ENCODE measurements at regions of chr5 and their contacts with region 1.

Region 1: DNA sequence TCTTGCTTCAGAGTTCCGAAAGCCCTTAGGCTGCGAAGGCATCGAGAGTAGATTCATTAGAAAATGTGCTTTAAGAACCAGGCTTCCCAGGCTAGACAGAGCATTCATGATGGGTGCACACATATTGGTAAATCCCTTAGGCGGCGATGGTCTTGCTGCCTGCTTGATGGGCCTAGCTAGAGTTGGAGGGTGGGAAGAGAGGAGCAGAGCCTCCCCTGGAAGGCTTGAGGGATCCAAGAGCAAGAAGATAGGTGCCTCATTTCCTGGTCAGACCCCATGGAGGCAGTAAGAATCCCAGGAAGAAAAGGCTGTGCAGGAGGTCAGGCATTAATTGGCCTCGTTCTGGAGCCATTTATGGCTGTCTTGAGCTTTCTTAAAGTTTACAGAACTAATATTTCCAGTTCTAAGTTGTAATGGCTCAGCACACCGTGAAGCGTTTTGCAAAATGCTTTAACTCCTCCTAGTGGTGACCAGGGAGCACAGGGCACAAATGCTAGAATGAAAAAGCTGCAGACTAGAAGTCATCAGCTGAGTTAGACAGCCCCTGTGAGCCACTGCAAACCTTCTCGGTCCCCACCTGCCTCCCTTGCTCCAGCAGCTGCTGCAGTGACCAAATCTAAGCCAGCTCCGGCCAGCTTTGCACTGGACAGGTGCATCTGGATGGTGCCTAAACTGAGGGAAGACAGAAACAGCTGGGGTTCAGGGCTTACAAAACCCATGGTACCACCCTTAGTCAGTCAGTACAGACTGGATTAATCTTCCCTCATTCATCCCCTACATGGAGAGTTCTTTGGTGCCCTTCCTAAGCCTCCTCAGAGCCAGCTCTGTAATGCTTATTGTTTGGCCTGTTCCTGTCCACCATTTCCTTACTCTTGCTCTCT is 14.7 kb downstream of the SLC45A2 start:
- DNase-seq: peak; percentile 44 to 58
- ATAC-seq: peak; percentile 97
- H3K4me3 ChIP-seq: no peak overlapping the region
- H3K27ac ChIP-seq: no peak overlapping the region
- H3K4me1 ChIP-seq: no peaks in the 10 kb centered on the region
- CTCF ChIP-seq: peak; percentile 64
- EP300 ChIP-seq: no peak
- POLR2A ChIP-seq: no peak
- RAD21 ChIP-seq: peak; percentile 80 to 88

Region 2: GRCh38 chr5:33433303-33434240 is 536.2 kb before region 1 on chr5:
- CTCF ChIA-PET with region 1: interaction called, 32 read pairs
- POLR2A ChIA-PET with region 1: no interaction called
- DNase-seq: no peak
- ATAC-seq: no peak
- H3K4me3 ChIP-seq: no peak overlapping the region
- H3K27ac ChIP-seq: no peak overlapping the region
- H3K4me1 ChIP-seq: peaks cover 4% of the 10 kb centered on the region; the same call in 1 of the 3 replicates
- CTCF ChIP-seq: no peak
- EP300 ChIP-seq: no peak
- POLR2A ChIP-seq: no peak
- RAD21 ChIP-seq: no peak

Region 3: GRCh38 chr5:33470544-33470943 is 499.3 kb before region 1 on chr5:
- CTCF ChIA-PET with region 1: interaction called, 36 read pairs
- POLR2A ChIA-PET with region 1: no interaction called
- DNase-seq: peak; percentile 18 to 45
- ATAC-seq: peak; percentile 90 to 91
- H3K4me3 ChIP-seq: no peak overlapping the region
- H3K27ac ChIP-seq: no peak overlapping the region
- H3K4me1 ChIP-seq: peaks cover 6% of the 10 kb centered on the region; the same call in 1 of the 3 replicates
- CTCF ChIP-seq: peak; percentile 46
- EP300 ChIP-seq: no peak
- POLR2A ChIP-seq: no peak
- RAD21 ChIP-seq: peak; percentile 42 to 54

Region 4: DNA sequence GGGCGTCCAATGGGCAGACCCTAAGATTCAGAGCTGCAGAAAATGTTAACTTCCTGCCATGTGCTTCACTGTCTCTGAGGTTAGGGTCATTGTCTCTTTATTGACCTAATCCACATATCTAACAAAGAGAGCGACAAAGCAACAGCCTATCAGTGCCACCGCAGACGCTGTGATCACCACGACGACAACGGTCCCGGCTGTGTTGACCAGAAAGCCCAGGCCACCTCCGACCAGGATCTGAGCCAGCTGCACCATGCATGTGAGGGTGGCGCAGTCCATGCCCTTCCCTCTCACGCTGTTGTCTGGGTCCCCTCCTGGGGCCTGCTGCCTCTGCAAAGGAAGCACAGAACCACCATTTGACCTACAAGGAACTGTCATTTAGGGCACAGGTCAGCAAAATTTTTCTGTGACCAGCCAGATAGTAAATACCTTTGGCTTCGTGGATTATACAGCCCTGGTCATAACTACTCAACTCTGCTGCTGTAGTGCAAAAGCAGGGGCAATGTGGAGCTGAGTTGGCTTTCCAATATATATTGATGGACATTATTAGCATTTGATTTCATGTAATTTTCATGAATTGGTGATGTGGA is 25.2 kb before region 1 on chr5:
- CTCF ChIA-PET with region 1: interaction called, 11 read pairs
- POLR2A ChIA-PET with region 1: no interaction called
- DNase-seq: no peak
- ATAC-seq: no peak
- H3K4me3 ChIP-seq: no peak overlapping the region
- H3K27ac ChIP-seq: no peak overlapping the region
- H3K4me1 ChIP-seq: no peaks in the 10 kb centered on the region
- CTCF ChIP-seq: no peak
- EP300 ChIP-seq: no peak
- POLR2A ChIP-seq: no peak
- RAD21 ChIP-seq: no peak

Region 5: DNA sequence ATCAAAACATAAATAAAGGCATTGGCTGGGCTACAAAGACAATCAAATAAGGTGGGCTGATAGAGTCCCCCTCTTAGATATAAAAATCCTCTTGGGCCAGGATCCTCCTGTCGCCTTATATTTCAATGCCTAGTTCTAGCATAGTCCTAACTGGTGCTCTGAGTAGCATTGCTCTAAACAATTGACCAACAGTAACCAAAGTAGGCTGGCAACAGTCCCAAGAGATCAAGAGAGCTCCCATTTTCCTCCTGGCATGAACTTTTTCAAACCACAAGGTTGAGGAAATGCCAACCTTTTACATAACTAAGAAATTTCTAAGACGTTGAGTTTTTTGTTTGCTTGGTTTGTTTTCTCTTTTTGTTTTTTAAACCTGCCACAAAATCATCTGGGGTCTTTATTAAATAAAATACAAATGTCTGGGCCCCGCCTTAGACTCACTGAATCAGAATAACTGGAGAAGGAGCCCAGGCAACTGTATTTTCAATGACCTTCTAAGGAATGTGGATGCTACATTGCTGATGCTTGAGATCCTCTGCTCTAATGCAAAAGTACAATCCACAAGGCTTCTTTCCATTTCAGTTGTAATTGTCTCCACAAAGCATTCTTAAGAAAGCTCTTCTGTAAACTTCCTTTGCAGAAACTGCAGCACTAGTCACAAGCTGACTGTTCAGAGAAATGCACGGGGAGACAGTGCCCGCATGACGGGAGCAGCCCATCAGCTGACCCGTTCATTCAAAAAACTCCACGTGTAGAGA is 11.8 kb after region 1 on chr5:
- CTCF ChIA-PET with region 1: interaction called, 18 read pairs
- POLR2A ChIA-PET with region 1: no interaction called
- DNase-seq: no peak
- ATAC-seq: no peak
- H3K4me3 ChIP-seq: no peak overlapping the region
- H3K27ac ChIP-seq: no peak overlapping the region
- H3K4me1 ChIP-seq: no peaks in the 10 kb centered on the region
- CTCF ChIP-seq: no peak
- EP300 ChIP-seq: no peak
- POLR2A ChIP-seq: no peak
- RAD21 ChIP-seq: no peak

Region 6: GRCh38 chr5:34803974-34804732 is 834.3 kb after region 1 on chr5:
- CTCF ChIA-PET with region 1: no interaction called
- POLR2A ChIA-PET with region 1: no interaction called
- DNase-seq: no peak
- ATAC-seq: no peak
- H3K4me3 ChIP-seq: no peak overlapping the region
- H3K27ac ChIP-seq: no peak overlapping the region
- H3K4me1 ChIP-seq: no peaks in the 10 kb centered on the region
- CTCF ChIP-seq: no peak
- EP300 ChIP-seq: no peak
- POLR2A ChIP-seq: no peak
- RAD21 ChIP-seq: no peak

Measured in A549 (cell line).